CD8-positive, alpha-beta T cell (primary cell): ENCODE measurements at regions of chr12 and their contacts with region 1.

Region 1: DNA sequence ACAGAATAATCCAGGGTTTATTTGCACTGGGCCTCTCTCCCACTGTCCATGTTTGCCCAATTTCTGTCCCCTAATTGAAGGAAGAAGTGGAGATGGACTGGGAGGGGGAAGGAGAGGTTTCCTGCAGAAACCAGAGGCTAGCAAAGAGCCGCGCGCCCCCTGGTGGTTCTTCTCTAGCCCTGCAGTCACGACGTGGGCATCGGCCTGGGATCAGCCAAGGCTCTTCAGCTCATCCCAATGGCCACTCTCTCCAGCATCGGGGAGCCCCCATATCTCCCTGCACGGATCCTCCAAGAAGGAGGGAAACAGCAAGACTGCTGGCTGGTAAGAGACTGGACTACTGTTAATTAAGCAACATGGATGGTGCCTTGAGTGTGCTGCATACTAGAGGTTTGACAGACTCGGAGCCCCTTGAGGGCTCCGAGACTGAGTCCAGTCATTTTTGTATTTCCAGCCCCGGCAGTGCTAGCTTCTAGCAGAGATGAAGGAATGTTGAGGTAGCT is 18.7 kb downstream of the ZBTB39 start:
- DNase-seq: peak; percentile 41 to 83 (median 75)
- ATAC-seq: peak; percentile 92
- H3K4me3 ChIP-seq: no peak overlapping the region
- H3K4me3 Mint-ChIP-seq: peak overlapping the region; percentile 49
- H3K27ac ChIP-seq: no peak overlapping the region
- H3K27ac Mint-ChIP-seq: no peak overlapping the region
- H3K4me1 ChIP-seq: peaks cover 4% of the 10 kb centered on the region
- H3K4me1 Mint-ChIP-seq: peaks cover 11% of the 10 kb centered on the region
- H3K27me3 ChIP-seq: no peaks in the 10 kb centered on the region
- H3K27me3 Mint-ChIP-seq: no peaks in the 10 kb centered on the region
- CTCF ChIP-seq: peak; percentile 66

Region 2: GRCh38 chr12:56510786-56511185 is 476.8 kb before region 1 on chr12:
- CTCF ChIA-PET with region 1: interaction called, 3 read pairs
- POLR2A ChIA-PET with region 1: no interaction called
- intact Hi-C with region 1: loop called (anchors 5 kb)
- DNase-seq: no peak
- ATAC-seq: no peak
- H3K4me3 ChIP-seq: no peak overlapping the region
- H3K4me3 Mint-ChIP-seq: no peak overlapping the region
- H3K27ac ChIP-seq: no peak overlapping the region
- H3K27ac Mint-ChIP-seq: no peak overlapping the region
- H3K4me1 ChIP-seq: no peaks in the 10 kb centered on the region
- H3K4me1 Mint-ChIP-seq: peaks cover 4% of the 10 kb centered on the region
- H3K27me3 ChIP-seq: no peaks in the 10 kb centered on the region
- H3K27me3 Mint-ChIP-seq: peaks cover 3% of the 10 kb centered on the region
- CTCF ChIP-seq: no peak

Region 3: GRCh38 chr12:56751712-56752598 is 235.6 kb before region 1 on chr12 and contains the start of gene PRIM1:
- CTCF ChIA-PET with region 1: interaction called, 78 read pairs
- POLR2A ChIA-PET with region 1: no interaction called
- intact Hi-C with region 1: loop called in 1 of 2 experiments (anchors 1 kb)
- DNase-seq: peak; percentile 58 to 89 (median 81)
- ATAC-seq: peak; percentile 81
- H3K4me3 ChIP-seq: peak within 1 kb of the TSS; percentile 91 to 99
- H3K4me3 Mint-ChIP-seq: peak within 1 kb of the TSS; percentile 97
- H3K27ac ChIP-seq: peak within 1 kb of the TSS; percentile 71 to 76
- H3K27ac Mint-ChIP-seq: peak within 1 kb of the TSS; percentile 86
- H3K4me1 ChIP-seq: peaks cover 11% of the 10 kb centered on the region
- H3K4me1 Mint-ChIP-seq: peaks cover 22% of the 10 kb centered on the region
- H3K27me3 ChIP-seq: no peaks in the 10 kb centered on the region
- H3K27me3 Mint-ChIP-seq: no peaks in the 10 kb centered on the region
- CTCF ChIP-seq: peak; percentile 23
- total RNA-seq, gene PRIM1: 5.0 to 5.8 TPM

Region 4: DNA sequence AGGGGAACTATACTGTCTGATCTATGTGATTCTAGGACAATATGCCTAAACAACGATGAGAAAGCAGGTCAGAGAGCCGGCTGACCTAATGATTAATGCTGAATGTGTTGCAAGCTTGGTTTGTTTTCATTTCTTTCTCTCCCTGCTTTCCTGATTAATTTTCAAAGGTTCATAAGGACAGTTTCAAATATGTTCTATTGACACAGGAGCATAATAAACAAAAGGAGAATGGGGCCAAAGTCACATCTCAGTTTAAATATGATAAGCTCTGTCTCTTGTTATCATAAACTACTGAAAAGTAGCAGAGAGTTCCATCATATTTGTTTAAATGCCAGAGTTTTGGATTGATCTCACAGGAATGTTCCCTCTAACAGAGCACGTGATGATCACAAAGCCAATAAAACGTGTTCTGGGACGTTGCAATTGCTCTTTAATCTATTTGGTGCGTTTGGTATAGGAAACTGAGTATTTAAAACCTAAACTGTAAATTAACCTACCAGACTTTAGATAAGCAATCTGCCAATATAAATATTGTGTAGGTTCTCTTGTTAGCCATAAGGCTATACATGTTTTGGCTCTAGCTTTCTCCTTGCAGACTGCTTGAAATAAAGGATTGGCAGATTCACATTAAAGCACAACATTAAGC is 228.2 kb before region 1 on chr12:
- CTCF ChIA-PET with region 1: interaction called, 78 read pairs
- POLR2A ChIA-PET with region 1: no interaction called
- intact Hi-C with region 1: loop called in 1 of 2 experiments (anchors 1 kb)
- DNase-seq: no peak
- ATAC-seq: no peak
- H3K4me3 ChIP-seq: no peak overlapping the region
- H3K4me3 Mint-ChIP-seq: no peak overlapping the region
- H3K27ac ChIP-seq: no peak overlapping the region
- H3K27ac Mint-ChIP-seq: no peak overlapping the region
- H3K4me1 ChIP-seq: no peaks in the 10 kb centered on the region
- H3K4me1 Mint-ChIP-seq: no peaks in the 10 kb centered on the region
- H3K27me3 ChIP-seq: no peaks in the 10 kb centered on the region
- H3K27me3 Mint-ChIP-seq: peaks cover 5% of the 10 kb centered on the region
- CTCF ChIP-seq: no peak

Region 5: GRCh38 chr12:56839915-56840325 is 147.7 kb before region 1 on chr12:
- CTCF ChIA-PET with region 1: no interaction called
- POLR2A ChIA-PET with region 1: no interaction called
- intact Hi-C with region 1: loop called in 1 of 2 experiments (anchors 2 kb)
- DNase-seq: peak in 4 of 9 experiments; percentile 13 to 35 (median 16)
- ATAC-seq: no peak
- H3K4me3 ChIP-seq: no peak overlapping the region
- H3K4me3 Mint-ChIP-seq: no peak overlapping the region
- H3K27ac ChIP-seq: no peak overlapping the region
- H3K27ac Mint-ChIP-seq: no peak overlapping the region
- H3K4me1 ChIP-seq: peaks cover 10% of the 10 kb centered on the region
- H3K4me1 Mint-ChIP-seq: peaks cover 17% of the 10 kb centered on the region
- H3K27me3 ChIP-seq: no peaks in the 10 kb centered on the region
- H3K27me3 Mint-ChIP-seq: no peaks in the 10 kb centered on the region
- CTCF ChIP-seq: no peak

Region 6: DNA sequence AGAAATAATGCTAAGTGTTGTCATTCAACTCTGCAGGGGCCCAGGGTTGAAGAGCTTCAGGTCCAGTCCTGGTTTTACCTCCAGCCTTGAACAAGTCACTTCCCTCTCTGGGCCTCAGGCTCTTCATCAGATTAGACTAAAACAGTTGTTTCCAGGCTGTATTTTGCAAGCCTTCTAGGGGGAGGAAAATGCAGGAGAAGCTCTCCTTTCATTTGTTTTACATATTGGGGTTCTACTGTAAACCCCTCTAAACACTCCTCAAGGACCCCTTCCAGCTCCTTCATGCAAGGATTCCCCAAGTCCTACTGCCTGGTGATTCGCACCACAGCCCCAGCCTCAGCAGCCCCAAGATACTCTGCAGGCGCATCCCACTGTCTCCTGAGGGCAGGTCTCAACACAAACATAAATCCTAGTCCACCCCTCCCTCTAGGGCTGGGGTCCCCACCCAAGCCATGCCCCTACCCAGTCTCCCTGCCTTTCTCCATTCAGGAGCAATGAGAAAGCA is 56.1 kb before region 1 on chr12:
- CTCF ChIA-PET with region 1: no interaction called
- POLR2A ChIA-PET with region 1: no interaction called
- intact Hi-C with region 1: no loop called
- DNase-seq: peak in 2 of 9 experiments; percentile 24 to 54
- ATAC-seq: no peak
- H3K4me3 ChIP-seq: no peak overlapping the region
- H3K4me3 Mint-ChIP-seq: no peak overlapping the region
- H3K27ac ChIP-seq: no peak overlapping the region
- H3K27ac Mint-ChIP-seq: no peak overlapping the region
- H3K4me1 ChIP-seq: no peaks in the 10 kb centered on the region
- H3K4me1 Mint-ChIP-seq: peaks cover 6% of the 10 kb centered on the region
- H3K27me3 ChIP-seq: no peaks in the 10 kb centered on the region
- H3K27me3 Mint-ChIP-seq: peaks cover 4% of the 10 kb centered on the region
- CTCF ChIP-seq: no peak

Region 7: GRCh38 chr12:57135527-57136326 is 148.1 kb after region 1 on chr12:
- CTCF ChIA-PET with region 1: no interaction called
- POLR2A ChIA-PET with region 1: no interaction called
- intact Hi-C with region 1: no loop called
- DNase-seq: no peak
- ATAC-seq: no peak
- H3K4me3 ChIP-seq: no peak overlapping the region
- H3K4me3 Mint-ChIP-seq: no peak overlapping the region
- H3K27ac ChIP-seq: no peak overlapping the region
- H3K27ac Mint-ChIP-seq: no peak overlapping the region
- H3K4me1 ChIP-seq: no peaks in the 10 kb centered on the region
- H3K4me1 Mint-ChIP-seq: no peaks in the 10 kb centered on the region
- H3K27me3 ChIP-seq: no peaks in the 10 kb centered on the region
- H3K27me3 Mint-ChIP-seq: no peaks in the 10 kb centered on the region
- CTCF ChIP-seq: no peak